ENCODE measurements at regions of chr4 and their contacts with region 1.

Region 1: DNA sequence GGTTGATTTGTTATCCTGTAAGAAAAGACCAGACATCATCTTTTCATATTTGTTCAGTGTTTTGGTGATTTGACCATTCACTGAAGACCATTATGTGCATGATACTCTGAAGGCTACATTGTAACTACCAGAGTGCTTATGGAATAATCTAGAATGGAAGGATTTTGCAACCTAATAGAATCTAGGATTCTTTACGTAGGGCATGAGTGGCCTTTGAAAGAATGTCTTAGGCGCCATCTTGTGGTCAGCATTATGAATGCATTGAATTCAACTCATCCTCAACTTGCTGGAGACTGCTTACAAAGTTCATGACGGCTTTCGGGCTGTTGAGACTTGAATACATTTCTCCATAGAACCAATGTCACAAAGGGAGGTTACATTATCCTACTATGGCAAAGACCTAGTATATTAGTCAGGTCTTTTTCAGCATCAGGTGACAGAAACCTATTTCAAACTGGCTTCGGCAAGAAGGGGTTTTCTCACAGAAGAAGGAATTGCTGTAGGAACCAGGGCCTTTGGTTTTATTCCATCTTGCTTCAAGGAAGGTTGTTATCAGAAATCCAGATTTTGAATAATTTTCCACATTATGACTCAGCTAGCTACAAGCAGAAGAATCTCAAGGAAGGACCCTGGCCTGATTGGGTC is 104.1 kb downstream of the GPAT3 start:
- DNase-seq: peak in 1 of 3 donors; percentile 89
- ATAC-seq: peak; percentile 92
- H3K4me3 ChIP-seq: no peak overlapping the region
- H3K4me1 ChIP-seq: no peaks in the 10 kb centered on the region
- CTCF ChIP-seq: peak; percentile 54

Region 2: GRCh38 chr4:83503974-83504373 is 136.0 kb before region 1 on chr4:
- intact Hi-C with region 1: loop called (anchors 5 to 10 kb)
- DNase-seq: no peak
- ATAC-seq: no peak
- H3K4me3 ChIP-seq: no peak overlapping the region
- H3K4me1 ChIP-seq: no peaks in the 10 kb centered on the region
- CTCF ChIP-seq: no peak

Region 3: DNA sequence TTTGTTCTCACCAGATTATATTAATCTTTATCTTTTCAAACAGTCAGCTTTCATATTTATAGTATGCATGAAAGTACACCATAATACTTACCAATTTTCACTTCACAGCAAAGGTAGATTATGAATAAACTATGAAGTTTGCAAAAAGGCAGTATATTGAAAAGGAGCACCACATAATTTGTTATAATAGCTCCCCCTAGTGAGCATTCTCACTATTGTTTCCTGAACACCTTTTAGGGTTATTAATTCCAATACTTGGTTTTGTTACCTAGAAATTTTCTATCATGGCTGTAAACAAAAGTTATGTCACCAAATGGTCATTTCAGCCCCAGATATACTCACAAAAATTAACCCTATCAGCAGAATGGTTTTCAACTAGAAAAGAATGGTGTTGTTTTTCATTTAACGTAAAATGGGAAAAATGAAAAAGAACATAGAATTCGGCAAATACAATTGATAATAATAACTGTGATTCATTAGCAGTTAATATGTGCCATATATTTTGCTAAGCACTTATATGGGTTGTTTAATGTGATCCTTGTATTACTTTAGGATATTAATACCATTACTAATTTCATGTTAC is 889.3 kb after region 1 on chr4:
- intact Hi-C with region 1: loop called in 1 of 2 experiments (anchors 10 kb)
- DNase-seq: no peak
- ATAC-seq: no peak
- H3K4me3 ChIP-seq: no peak overlapping the region
- H3K4me1 ChIP-seq: no peaks in the 10 kb centered on the region
- CTCF ChIP-seq: peak; percentile 20

Measured in mucosa of descending colon (tissue), 3 donors.